H1 (cell line): ENCODE measurements at regions of chr21 and their contacts with region 1.

Region 1: DNA sequence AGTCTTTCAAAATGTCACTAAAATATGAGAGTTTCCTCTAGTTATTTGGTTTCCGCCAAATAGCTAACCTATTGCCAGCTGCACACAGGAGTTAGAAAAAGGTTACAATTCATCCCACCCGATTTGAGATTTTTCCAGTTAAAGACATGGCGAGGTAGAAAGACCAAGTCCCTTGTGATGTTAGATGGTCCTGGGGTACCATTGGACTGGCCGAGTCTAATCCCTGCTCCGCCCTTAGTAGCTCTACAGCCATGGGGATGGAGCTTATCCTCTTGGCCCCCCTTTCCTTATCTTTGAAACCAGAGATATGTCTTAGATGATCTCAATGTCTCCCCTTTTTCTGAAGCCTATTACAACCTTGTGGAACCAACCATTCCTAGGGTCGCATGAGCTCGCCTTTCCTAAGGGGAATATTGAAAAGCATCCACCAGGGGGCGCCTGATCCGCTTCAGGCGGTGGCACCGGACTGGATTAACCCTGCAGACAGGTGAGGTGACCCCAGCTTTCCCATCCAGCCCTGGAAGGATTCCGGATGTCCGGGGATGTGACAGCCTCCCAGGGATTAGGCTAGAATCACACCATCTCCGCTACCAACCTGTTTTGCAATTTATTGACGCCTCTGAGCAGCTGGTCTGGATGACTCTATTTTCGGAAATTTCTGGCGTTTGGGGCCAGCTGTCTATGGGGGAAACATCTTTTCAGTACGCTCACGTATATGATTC is 68.3 kb upstream of the SIM2 start:
- DNase-seq: peak; percentile 64 to 96
- H3K4me3 ChIP-seq: no peak overlapping the region
- H3K27ac ChIP-seq: no peak overlapping the region
- H3K4me1 ChIP-seq: no peaks in the 10 kb centered on the region
- H3K27me3 ChIP-seq: peaks cover 0 to 7% (median 0%) of the 10 kb centered on the region in 4 experiments; a peak in 2 of 7 replicates
- CTCF ChIP-seq: peak; percentile 82 to 88 (median 84)
- EP300 ChIP-seq: no peak
- POLR2A ChIP-seq: no peak
- RAD21 ChIP-seq: peak; percentile 74 to 79

Region 2: GRCh38 chr21:36504067-36505058 is 126.3 kb before region 1 on chr21:
- CTCF ChIA-PET with region 1: interaction called, 11 read pairs
- POLR2A ChIA-PET with region 1: no interaction called
- DNase-seq: no peak
- H3K4me3 ChIP-seq: no peak overlapping the region
- H3K27ac ChIP-seq: no peak overlapping the region
- H3K4me1 ChIP-seq: no peaks in the 10 kb centered on the region
- H3K27me3 ChIP-seq: no peaks in the 10 kb centered on the region
- CTCF ChIP-seq: peak in 2 of 3 experiments; percentile 68 to 73; a peak in 3 of 4 replicates
- EP300 ChIP-seq: no peak
- POLR2A ChIP-seq: no peak
- RAD21 ChIP-seq: peak; percentile 85 to 88

Region 3: DNA sequence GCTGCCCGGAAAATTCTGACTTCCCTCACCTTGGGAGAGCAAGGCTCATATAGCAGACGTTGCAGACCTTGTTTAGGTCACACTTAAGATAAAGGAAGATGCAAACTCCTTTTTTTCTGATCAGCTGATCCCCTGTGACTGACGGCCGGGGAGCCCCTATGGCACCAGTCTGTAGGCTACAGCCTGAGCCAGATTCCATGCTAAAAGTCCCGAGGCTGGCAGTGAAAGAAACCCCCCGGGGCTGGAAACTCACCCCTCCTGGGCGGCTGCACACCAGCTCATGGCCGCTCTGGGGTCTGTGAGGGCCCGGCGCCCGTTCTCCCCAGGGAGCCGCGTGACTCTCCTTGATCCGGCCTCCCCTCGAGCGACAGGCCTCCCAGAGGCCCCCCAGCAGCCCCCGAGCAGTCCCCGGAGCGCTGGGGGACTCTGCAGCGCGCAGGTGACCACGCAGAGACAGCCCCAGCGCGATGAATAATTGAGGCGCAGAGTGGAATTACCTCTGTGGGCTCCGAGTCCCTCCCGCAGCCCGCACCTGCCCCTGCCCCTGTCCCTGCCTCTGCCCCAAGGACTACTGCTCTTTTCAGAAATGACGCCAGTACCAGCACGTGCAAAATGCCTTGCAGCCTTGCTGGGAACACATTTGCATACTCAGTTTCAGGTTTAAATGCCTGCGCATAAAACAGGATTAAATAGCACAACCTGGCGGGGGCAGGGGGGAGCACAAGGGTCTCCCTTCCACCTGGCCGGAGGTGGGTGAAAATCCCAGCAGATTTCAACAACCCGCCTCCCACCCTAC is 88.1 kb before region 1 on chr21:
- CTCF ChIA-PET with region 1: no interaction called
- POLR2A ChIA-PET with region 1: no interaction called
- DNase-seq: peak; percentile 25 to 61
- H3K4me3 ChIP-seq: peak overlapping the region in 2 of 4 experiments; percentile 17 to 47; a peak in 3 of 8 replicates
- H3K27ac ChIP-seq: no peak overlapping the region
- H3K4me1 ChIP-seq: peaks cover 0 to 7% (median 4%) of the 10 kb centered on the region in 4 experiments; a peak in 5 of 7 replicates
- H3K27me3 ChIP-seq: peaks cover 0 to 8% (median under 1%) of the 10 kb centered on the region in 4 experiments; a peak in 3 of 7 replicates
- CTCF ChIP-seq: peak; percentile 36 to 53 (median 43)
- EP300 ChIP-seq: no peak
- POLR2A ChIP-seq: no peak
- RAD21 ChIP-seq: peak; percentile 37 to 52; a peak in 3 of 4 replicates

Region 4: GRCh38 chr21:36615274-36615964 is 15.2 kb before region 1 on chr21:
- CTCF ChIA-PET with region 1: interaction called, 19 read pairs
- POLR2A ChIA-PET with region 1: no interaction called
- DNase-seq: peak in 1 of 2 experiments; percentile 60
- H3K4me3 ChIP-seq: no peak overlapping the region
- H3K27ac ChIP-seq: no peak overlapping the region
- H3K4me1 ChIP-seq: no peaks in the 10 kb centered on the region
- H3K27me3 ChIP-seq: no peaks in the 10 kb centered on the region
- CTCF ChIP-seq: peak; percentile 55 to 98 (median 67)
- EP300 ChIP-seq: no peak
- POLR2A ChIP-seq: no peak
- RAD21 ChIP-seq: peak; percentile 36 to 57; a peak in 3 of 4 replicates

Region 5: DNA sequence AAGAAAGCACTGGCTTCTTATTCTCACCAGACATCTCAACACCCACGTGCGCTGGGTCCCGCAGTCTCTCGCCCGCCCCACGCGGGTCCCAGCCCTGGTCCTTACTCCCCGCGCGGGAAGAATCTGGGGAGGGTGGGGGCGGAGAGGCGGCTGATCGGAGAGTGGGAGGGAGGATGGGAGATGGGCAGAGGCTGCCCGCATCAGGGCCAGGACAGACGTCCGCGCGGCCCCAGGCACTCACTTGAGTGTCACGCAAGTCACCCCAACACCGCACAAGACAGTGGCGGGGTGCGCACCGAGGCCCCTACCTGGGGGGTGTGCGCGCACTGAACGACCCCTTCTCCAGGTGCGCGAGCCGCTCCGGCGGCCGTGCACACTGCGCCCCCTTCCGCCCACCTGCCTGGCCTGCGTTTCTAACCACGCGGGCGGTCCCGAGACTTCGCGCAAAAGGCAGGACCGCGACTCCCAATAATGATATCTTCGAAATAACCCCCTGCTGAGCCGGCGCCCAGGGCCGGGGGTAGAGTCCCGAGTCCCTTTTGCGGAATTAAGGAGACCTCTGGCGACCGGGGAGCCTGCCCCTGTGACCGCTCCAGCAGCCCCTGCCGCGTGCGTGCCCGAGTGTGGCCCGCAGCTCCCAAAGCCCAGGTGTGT is 62.3 kb after region 1 on chr21:
- CTCF ChIA-PET with region 1: interaction called, 40 read pairs
- POLR2A ChIA-PET with region 1: no interaction called
- DNase-seq: peak in 1 of 2 experiments; percentile 83
- H3K4me3 ChIP-seq: peak overlapping the region in 1 of 4 experiments; percentile 54; a peak in 3 of 8 replicates
- H3K27ac ChIP-seq: no peak overlapping the region
- H3K4me1 ChIP-seq: peaks cover 5 to 32% (median 20%) of the 10 kb centered on the region in 4 experiments
- H3K27me3 ChIP-seq: peaks cover 85 to 89% (median 88%) of the 10 kb centered on the region in 4 experiments
- CTCF ChIP-seq: peak in 2 of 3 experiments; percentile 60 to 65; a peak in 3 of 4 replicates
- EP300 ChIP-seq: no peak
- POLR2A ChIP-seq: no peak
- RAD21 ChIP-seq: peak; percentile 58 to 59

Region 6: GRCh38 chr21:36854391-36854790 is 223.7 kb after region 1 on chr21:
- CTCF ChIA-PET with region 1: interaction called, 11 read pairs
- POLR2A ChIA-PET with region 1: no interaction called
- DNase-seq: peak; percentile 29 to 81
- H3K4me3 ChIP-seq: no peak overlapping the region
- H3K27ac ChIP-seq: no peak overlapping the region
- H3K4me1 ChIP-seq: peaks cover 0 to 2% (median 1%) of the 10 kb centered on the region in 4 experiments; a peak in 2 of 7 replicates
- H3K27me3 ChIP-seq: no peaks in the 10 kb centered on the region
- CTCF ChIP-seq: peak; percentile 67 to 87 (median 86)
- EP300 ChIP-seq: no peak
- POLR2A ChIP-seq: no peak
- RAD21 ChIP-seq: peak; percentile 82 to 92